Endothelial cell of umbilical vein (primary cell): ENCODE measurements at regions of chr7 and their contacts with region 1.

Region 1: DNA sequence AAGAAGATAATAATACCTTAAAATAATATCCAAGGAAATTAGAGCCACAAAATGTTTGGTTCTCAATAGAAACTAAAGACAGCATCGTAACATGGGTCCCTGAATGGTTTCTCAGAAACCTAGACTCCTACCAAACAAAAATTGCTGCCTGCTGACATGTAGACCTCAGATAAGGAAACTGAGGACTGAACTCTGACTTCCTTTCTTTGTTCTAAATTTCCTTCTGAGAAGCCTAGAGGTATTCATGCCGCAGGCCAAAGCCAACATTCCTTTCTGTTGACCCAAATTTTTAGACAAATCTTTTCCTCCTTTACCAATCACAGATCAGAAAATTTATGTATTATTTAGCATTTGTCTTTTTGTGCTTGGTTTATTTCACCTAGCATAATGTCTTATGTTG is 816.7 kb upstream of the PHF14 start:
- DNase-seq: peak; percentile 97
- H3K4me3 ChIP-seq: peak overlapping the region; percentile 19 to 95 (median 50)
- H3K27ac ChIP-seq: peak overlapping the region; percentile 99
- H3K4me1 ChIP-seq: peaks cover 18% of the 10 kb centered on the region
- H3K27me3 ChIP-seq: no peaks in the 10 kb centered on the region
- CTCF ChIP-seq: no peak
- POLR2A ChIP-seq: peak; percentile 87

Region 2: DNA sequence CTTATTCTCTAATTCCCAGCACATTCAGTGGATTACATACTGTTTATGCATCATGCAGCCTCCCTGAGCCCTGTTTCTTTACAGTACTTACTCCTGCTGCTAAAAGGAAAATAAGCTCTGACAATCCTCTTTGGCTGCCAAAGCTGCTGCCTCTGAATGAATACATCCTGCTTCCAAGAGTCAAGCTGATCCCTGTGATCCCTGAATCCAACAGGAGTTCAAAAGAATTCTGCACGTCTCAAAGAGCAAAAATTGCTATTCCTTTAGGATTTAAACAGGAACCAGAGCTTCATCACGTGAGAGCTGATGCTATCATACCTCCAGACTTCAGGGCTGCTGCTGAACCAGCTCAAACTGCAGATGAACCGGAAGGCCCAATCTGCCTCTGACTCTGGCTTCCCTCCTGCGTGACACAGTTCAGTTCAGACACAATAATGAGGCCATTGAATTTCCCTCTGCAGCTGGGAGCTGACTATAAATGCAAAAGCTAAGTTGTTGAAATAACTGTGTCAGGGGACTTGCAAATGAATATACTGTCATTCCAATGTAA is 34.3 kb before region 1 on chr7:
- CTCF ChIA-PET with region 1: no interaction called
- POLR2A ChIA-PET with region 1: no interaction called
- dilution Hi-C with region 1: no loop called
- intact Hi-C with region 1: loop called (anchors 5 kb)
- DNase-seq: peak; percentile 82
- H3K4me3 ChIP-seq: no peak overlapping the region
- H3K27ac ChIP-seq: peak overlapping the region; percentile 20
- H3K4me1 ChIP-seq: peaks cover 6% of the 10 kb centered on the region
- H3K27me3 ChIP-seq: no peaks in the 10 kb centered on the region
- CTCF ChIP-seq: no peak
- POLR2A ChIP-seq: no peak

Region 3: GRCh38 chr7:10225275-10225674 is 68.3 kb after region 1 on chr7:
- CTCF ChIA-PET with region 1: no interaction called
- POLR2A ChIA-PET with region 1: no interaction called
- dilution Hi-C with region 1: no loop called
- intact Hi-C with region 1: loop called (anchors 1 kb)
- DNase-seq: peak; percentile 82
- H3K4me3 ChIP-seq: no peak overlapping the region
- H3K27ac ChIP-seq: no peak overlapping the region
- H3K4me1 ChIP-seq: no peaks in the 10 kb centered on the region
- H3K27me3 ChIP-seq: no peaks in the 10 kb centered on the region
- CTCF ChIP-seq: no peak
- POLR2A ChIP-seq: no peak

Region 4: GRCh38 chr7:10973061-10973944 is 816.3 kb after region 1 on chr7 and contains the start of gene PHF14:
- CTCF ChIA-PET with region 1: no interaction called
- POLR2A ChIA-PET with region 1: no interaction called
- dilution Hi-C with region 1: no loop called
- intact Hi-C with region 1: loop called (anchors 5 kb)
- DNase-seq: peak; percentile 98
- H3K4me3 ChIP-seq: peak within 1 kb of the TSS; percentile 47 to 84 (median 80)
- H3K27ac ChIP-seq: peak within 1 kb of the TSS; percentile 64
- H3K4me1 ChIP-seq: peaks cover 19% of the 10 kb centered on the region
- H3K27me3 ChIP-seq: peaks cover 7% of the 10 kb centered on the region in 2 experiments
- CTCF ChIP-seq: no peak
- POLR2A ChIP-seq: peak; percentile 86
- total RNA-seq, gene PHF14: 38.6 and 43.4 TPM in 2 replicates